Mucosa of descending colon (tissue), 3 donors: ENCODE measurements at regions of chr10 and their contacts with region 1.

Region 1: GRCh38 chr10:112955582-112956421 is 5.8 kb downstream of the TCF7L2 start:
- DNase-seq: peak in 1 of 3 donors; percentile 42
- ATAC-seq: peak; percentile 47
- H3K4me3 ChIP-seq: peak overlapping the region; percentile 7
- H3K4me1 ChIP-seq: peaks cover 47% of the 10 kb centered on the region
- CTCF ChIP-seq: no peak

Region 2: DNA sequence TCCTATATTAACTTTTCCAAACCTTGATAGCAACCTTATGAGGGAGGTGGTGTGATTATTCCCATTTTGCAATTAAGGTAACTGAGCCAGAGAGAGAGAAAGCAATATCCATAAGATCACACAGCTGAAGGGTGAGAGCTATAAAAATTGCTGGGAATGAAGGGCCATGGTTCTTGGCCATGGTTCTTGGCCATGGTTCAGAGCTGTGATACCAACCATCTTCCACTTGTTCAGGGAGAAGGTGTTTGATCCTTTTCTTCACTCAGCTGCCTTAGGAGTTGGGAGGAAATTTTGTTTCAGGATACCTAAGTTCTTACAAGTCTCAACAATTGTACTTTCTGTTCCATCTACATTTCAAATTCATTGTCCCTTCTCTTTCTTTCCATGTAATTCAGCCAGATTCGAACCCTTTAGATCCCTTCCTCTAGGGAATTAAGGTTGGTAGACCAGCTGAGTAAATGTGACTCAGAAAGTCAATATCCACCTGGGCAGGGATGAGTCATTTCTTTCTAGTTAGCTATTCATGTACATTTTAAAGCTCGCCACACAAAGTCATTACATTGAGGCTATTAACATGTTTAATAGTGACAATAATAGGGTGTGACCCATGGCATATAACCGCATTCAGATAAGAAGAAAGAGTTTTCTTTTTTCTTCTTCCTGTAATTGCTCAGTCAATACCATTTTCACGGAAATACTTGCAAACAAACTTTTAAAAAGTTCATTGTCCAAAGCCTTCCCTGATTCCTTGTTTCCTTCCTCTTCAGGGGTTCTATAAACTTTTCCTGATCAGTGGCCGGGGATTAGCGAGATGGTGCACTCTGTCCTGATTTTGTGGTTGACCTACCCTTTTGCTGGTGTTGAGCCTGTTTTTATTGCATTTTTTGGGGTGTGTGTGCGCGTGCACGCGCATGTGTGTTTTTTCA is 137.6 kb after region 1 on chr10:
- intact Hi-C with region 1: loop called in 1 of 2 experiments (anchors 5 kb)
- DNase-seq: peak in 2 of 3 donors; percentile 55 to 60
- ATAC-seq: peak; percentile 84
- H3K4me3 ChIP-seq: no peak overlapping the region
- H3K4me1 ChIP-seq: peaks cover 39% of the 10 kb centered on the region
- CTCF ChIP-seq: no peak